Naive thymus-derived CD4-positive, alpha-beta T cell (primary cell): ENCODE measurements at regions of chr2 and their contacts with region 1.

Region 1: DNA sequence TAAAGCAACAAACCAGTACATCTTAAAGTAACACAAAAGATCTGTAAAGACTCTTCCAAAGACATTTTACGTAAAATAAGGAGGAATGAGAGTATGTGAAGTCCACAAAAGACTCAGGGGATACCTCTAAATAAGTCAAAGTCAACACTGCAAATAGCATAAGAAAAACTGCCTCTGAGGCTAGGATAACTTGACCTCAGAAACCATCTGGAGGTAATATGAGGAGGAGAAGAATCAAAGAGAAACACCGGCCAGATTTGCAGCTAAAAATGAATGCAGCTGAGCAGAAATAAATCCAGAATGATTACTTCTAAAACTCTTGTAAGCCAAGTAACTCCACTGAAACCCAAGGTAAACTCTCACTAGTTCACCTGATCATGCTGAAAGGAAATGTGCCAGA is 52.2 kb upstream of the ERMN start:
- DNase-seq: no peak
- ATAC-seq: no peak
- H3K4me3 ChIP-seq: no peak overlapping the region
- H3K4me3 Mint-ChIP-seq: peak overlapping the region in 6 of 10 donors; percentile 23 to 66 (median 36)
- H3K27ac ChIP-seq: no peak overlapping the region
- H3K27ac Mint-ChIP-seq: peak overlapping the region in 4 of 9 donors; percentile 53 to 70 (median 58)
- H3K4me1 ChIP-seq: peaks cover 8 to 12% of the 10 kb centered on the region in 2 donors
- H3K4me1 Mint-ChIP-seq: peaks cover 3 to 57% (median 49%) of the 10 kb centered on the region in 7 donors
- H3K27me3 ChIP-seq: no peaks in the 10 kb centered on the region
- H3K27me3 Mint-ChIP-seq: no peaks in the 10 kb centered on the region

Region 2: GRCh38 chr2:156343940-156344301 is 1033.9 kb before region 1 on chr2:
- CTCF ChIA-PET with region 1: no interaction called
- POLR2A ChIA-PET with region 1: no interaction called
- intact Hi-C with region 1: no loop called
- DNase-seq: peak in 1 of 9 donors; percentile 49
- ATAC-seq: no peak
- H3K4me3 ChIP-seq: no peak overlapping the region
- H3K4me3 Mint-ChIP-seq: no peak overlapping the region
- H3K27ac ChIP-seq: peak overlapping the region; percentile 100
- H3K27ac Mint-ChIP-seq: peak overlapping the region in 8 of 9 donors; percentile 44 to 100 (median 96)
- H3K4me1 ChIP-seq: peaks cover 18% of the 10 kb centered on the region in 2 donors
- H3K4me1 Mint-ChIP-seq: peaks cover 7 to 46% (median 37%) of the 10 kb centered on the region in 7 donors
- H3K27me3 ChIP-seq: no peaks in the 10 kb centered on the region
- H3K27me3 Mint-ChIP-seq: no peaks in the 10 kb centered on the region

Region 3: GRCh38 chr2:157271590-157272203 is 106.2 kb before region 1 on chr2:
- CTCF ChIA-PET with region 1: no interaction called
- POLR2A ChIA-PET with region 1: no interaction called
- intact Hi-C with region 1: no loop called
- DNase-seq: no peak
- ATAC-seq: no peak
- H3K4me3 ChIP-seq: no peak overlapping the region
- H3K4me3 Mint-ChIP-seq: no peak overlapping the region
- H3K27ac ChIP-seq: no peak overlapping the region
- H3K27ac Mint-ChIP-seq: no peak overlapping the region
- H3K4me1 ChIP-seq: no peaks in the 10 kb centered on the region
- H3K4me1 Mint-ChIP-seq: peaks cover 0 to 6% (median 0%) of the 10 kb centered on the region in 7 donors
- H3K27me3 ChIP-seq: no peaks in the 10 kb centered on the region
- H3K27me3 Mint-ChIP-seq: peaks cover 0 to 10% (median 8%) of the 10 kb centered on the region in 5 donors

Region 4: GRCh38 chr2:157363612-157364101 is 14.2 kb before region 1 on chr2:
- CTCF ChIA-PET with region 1: no interaction called
- POLR2A ChIA-PET with region 1: interaction called, 4 read pairs
- intact Hi-C with region 1: loop called in 1 of 2 experiments (anchors 2 kb)
- DNase-seq: no peak
- ATAC-seq: no peak
- H3K4me3 ChIP-seq: no peak overlapping the region
- H3K4me3 Mint-ChIP-seq: peak overlapping the region in 7 of 10 donors; percentile 11 to 67 (median 49)
- H3K27ac ChIP-seq: no peak overlapping the region
- H3K27ac Mint-ChIP-seq: peak overlapping the region in 5 of 9 donors; percentile 22 to 78 (median 49)
- H3K4me1 ChIP-seq: peaks cover 7 to 28% of the 10 kb centered on the region in 2 donors
- H3K4me1 Mint-ChIP-seq: peaks cover 15 to 64% (median 38%) of the 10 kb centered on the region in 7 donors
- H3K27me3 ChIP-seq: no peaks in the 10 kb centered on the region
- H3K27me3 Mint-ChIP-seq: no peaks in the 10 kb centered on the region

Region 5: GRCh38 chr2:157395811-157396210 is 17.9 kb after region 1 on chr2:
- CTCF ChIA-PET with region 1: no interaction called
- POLR2A ChIA-PET with region 1: no interaction called
- intact Hi-C with region 1: loop called in 1 of 2 experiments (anchors 2 kb)
- DNase-seq: no peak
- ATAC-seq: peak; percentile 72
- H3K4me3 ChIP-seq: no peak overlapping the region
- H3K4me3 Mint-ChIP-seq: no peak overlapping the region
- H3K27ac ChIP-seq: no peak overlapping the region
- H3K27ac Mint-ChIP-seq: no peak overlapping the region
- H3K4me1 ChIP-seq: no peaks in the 10 kb centered on the region
- H3K4me1 Mint-ChIP-seq: peaks cover 0 to 22% (median 20%) of the 10 kb centered on the region in 7 donors
- H3K27me3 ChIP-seq: no peaks in the 10 kb centered on the region
- H3K27me3 Mint-ChIP-seq: no peaks in the 10 kb centered on the region

Region 6: DNA sequence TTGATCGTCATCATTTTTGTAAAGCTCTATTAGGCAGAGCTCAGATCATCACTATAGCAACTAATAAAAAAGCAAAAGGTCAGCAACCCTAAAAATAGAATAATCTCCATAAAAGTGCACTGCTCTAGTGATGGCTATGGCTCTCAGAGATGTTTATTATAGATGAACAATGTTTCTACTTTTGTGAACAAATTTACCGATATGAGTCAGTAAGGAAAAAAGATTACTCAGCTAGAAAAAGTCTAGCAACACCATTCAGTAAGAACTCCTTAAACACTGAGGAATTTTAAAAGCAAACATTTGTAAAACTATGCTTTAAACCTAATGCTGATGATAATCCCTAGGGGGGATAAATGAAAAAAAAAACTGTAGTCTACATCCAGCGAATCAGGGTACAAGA is 181.2 kb after region 1 on chr2:
- CTCF ChIA-PET with region 1: no interaction called
- POLR2A ChIA-PET with region 1: no interaction called
- intact Hi-C with region 1: no loop called
- DNase-seq: no peak
- ATAC-seq: no peak
- H3K4me3 ChIP-seq: no peak overlapping the region
- H3K4me3 Mint-ChIP-seq: peak overlapping the region in 1 of 10 donors; percentile 1
- H3K27ac ChIP-seq: no peak overlapping the region
- H3K27ac Mint-ChIP-seq: peak overlapping the region in 2 of 9 donors; percentile 7 to 29
- H3K4me1 ChIP-seq: peaks cover 0 to 4% of the 10 kb centered on the region in 2 donors
- H3K4me1 Mint-ChIP-seq: peaks cover 12 to 43% (median 37%) of the 10 kb centered on the region in 7 donors
- H3K27me3 ChIP-seq: no peaks in the 10 kb centered on the region
- H3K27me3 Mint-ChIP-seq: no peaks in the 10 kb centered on the region